ENCODE measurements at regions of chr4 and their contacts with region 1.

Region 1: DNA sequence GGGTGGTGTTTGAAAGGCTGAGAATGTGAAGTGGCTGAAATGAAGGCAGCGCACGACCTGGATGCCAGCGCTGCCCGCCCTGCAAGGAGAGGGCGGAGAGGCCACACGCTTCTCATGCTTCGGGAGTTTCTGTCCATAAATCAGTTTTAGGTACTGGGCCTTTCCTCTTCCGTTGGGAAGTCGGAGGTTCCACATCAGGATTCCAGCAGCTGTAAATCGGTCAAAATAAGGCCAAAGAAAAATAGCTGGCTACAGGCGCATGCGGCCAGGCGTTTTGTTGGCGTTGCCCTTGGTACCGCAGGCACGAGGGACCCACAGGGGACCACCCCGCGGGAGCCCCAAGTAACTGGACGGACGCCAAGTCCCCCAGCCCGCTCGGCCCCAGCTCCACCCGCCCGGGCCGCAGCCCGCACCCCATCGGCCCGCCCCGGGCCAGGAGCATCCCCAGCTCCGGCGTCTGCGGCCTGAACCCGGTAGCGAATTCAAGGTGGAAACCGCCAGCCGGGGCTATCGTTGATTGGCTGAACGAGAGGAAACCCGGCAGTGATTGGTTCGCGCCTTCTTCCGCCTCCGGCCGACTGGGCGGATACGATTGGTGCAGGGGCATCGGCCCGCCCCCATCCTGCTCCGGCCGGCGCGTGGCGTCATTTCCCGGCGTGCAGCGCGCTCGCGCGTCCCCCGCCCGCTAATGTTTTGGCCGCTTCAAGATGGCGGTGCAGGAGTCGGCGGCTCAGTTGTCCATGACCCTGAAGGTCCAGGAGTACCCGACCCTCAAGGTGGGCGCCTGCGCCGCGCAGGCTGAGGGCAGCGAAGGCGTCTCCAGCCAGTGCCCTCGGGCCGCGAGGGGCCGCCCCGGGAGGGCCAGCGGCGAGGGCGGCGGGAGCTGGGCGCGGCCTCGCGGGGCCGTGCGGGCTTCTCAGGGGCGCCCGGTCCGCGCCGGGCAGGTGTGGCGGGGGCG is at the start of gene MAEA:
- DNase-seq: peak; percentile 96 to 97 (median 96)
- H3K4me3 ChIP-seq: peak within 1 kb of the TSS; percentile 54 to 82 (median 73)
- H3K4me3 Mint-ChIP-seq: peak within 1 kb of the TSS; percentile 97
- H3K27ac ChIP-seq: peak within 1 kb of the TSS; percentile 65 to 91
- H3K27ac Mint-ChIP-seq: peak within 1 kb of the TSS; percentile 90 to 97 (median 96)
- H3K4me1 ChIP-seq: peaks cover 25 to 36% of the 10 kb centered on the region in 2 donors
- H3K4me1 Mint-ChIP-seq: peaks cover 34% of the 10 kb centered on the region
- H3K27me3 ChIP-seq: no peaks in the 10 kb centered on the region
- H3K27me3 Mint-ChIP-seq: peaks cover 0 to 1% (median 0%) of the 10 kb centered on the region in 3 donors
- CTCF ChIP-seq: no peak
- polyA plus RNA-seq, gene MAEA: 34.3 to 83.5 (median 37.7) TPM

Region 2: GRCh38 chr4:931960-932712 is 357.4 kb before region 1 on chr4 and contains the starts of genes GAK and TMEM175:
- intact Hi-C with region 1: loop called in 1 of 2 experiments (anchors 5 kb)
- DNase-seq: peak; percentile 96 to 97 (median 97)
- H3K4me3 ChIP-seq: peak within 1 kb of the TSS; percentile 92 to 97 (median 93)
- H3K4me3 Mint-ChIP-seq: peak within 1 kb of the TSS; percentile 96 to 98
- H3K27ac ChIP-seq: peak within 1 kb of the TSS; percentile 84 to 98
- H3K27ac Mint-ChIP-seq: peak within 1 kb of the TSS; percentile 96 to 99 (median 97)
- H3K4me1 ChIP-seq: peaks cover 69 to 76% of the 10 kb centered on the region in 2 donors
- H3K4me1 Mint-ChIP-seq: peaks cover 66% of the 10 kb centered on the region
- H3K27me3 ChIP-seq: no peaks in the 10 kb centered on the region
- H3K27me3 Mint-ChIP-seq: peaks cover 0 to 3% (median 3%) of the 10 kb centered on the region in 3 donors
- CTCF ChIP-seq: no peak
- polyA plus RNA-seq, gene GAK: 40.3 to 88.7 (median 54.9) TPM
- polyA plus RNA-seq, gene TMEM175: 18.9 to 216 (median 20.7) TPM

Region 3: DNA sequence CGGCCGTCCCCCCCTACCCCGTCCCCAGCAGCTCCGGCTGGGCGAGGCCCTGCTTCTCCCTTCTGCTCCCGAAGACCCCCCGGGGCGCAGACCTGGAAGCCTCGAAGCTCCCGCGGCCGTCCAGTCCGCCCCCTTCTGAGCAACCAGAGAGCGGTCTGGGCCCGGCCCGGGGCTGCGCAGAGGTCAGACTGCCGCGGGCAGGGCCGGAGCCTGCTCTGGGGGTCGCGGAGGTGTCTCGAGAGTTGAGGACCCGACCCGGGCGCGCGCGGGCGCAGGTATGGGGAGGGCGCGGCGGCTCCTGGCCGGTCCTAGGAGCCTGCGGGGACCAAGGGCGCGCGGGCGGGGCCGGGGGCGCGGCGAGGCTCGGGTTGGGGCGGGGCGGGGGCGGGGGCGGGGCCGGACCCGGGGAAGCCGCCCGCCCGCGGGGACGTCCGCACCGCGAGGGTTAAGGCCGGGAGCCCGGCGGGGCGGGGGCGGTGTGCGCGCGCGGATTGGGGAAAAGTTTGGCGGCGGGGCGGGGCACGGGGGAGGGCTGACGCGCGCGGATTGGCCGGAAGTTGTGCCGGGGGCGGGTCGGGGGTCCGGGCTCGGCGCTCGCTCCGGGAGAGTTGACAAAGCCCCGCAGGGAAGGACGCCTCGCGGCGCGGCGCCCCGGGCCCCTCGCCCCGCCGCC is 278.3 kb before region 1 on chr4 and contains the start of gene FGFRL1:
- intact Hi-C with region 1: loop called in 1 of 2 experiments (anchors 5 kb)
- DNase-seq: peak; percentile 71 to 85 (median 84)
- H3K4me3 ChIP-seq: peak within 1 kb of the TSS; percentile 34 to 82 (median 60)
- H3K4me3 Mint-ChIP-seq: peak within 1 kb of the TSS; percentile 83 to 89
- H3K27ac ChIP-seq: peak within 1 kb of the TSS; percentile 48 to 82
- H3K27ac Mint-ChIP-seq: peak within 1 kb of the TSS; percentile 54 to 90 (median 79)
- H3K4me1 ChIP-seq: peaks cover 23 to 43% of the 10 kb centered on the region in 2 donors
- H3K4me1 Mint-ChIP-seq: peaks cover 18% of the 10 kb centered on the region
- H3K27me3 ChIP-seq: peaks cover 4 to 41% of the 10 kb centered on the region in 2 donors
- H3K27me3 Mint-ChIP-seq: peaks cover 27 to 40% (median 30%) of the 10 kb centered on the region in 3 donors
- CTCF ChIP-seq: no peak
- polyA plus RNA-seq, gene FGFRL1: 0.17 to 77.7 (median 0.28) TPM

Region 4: DNA sequence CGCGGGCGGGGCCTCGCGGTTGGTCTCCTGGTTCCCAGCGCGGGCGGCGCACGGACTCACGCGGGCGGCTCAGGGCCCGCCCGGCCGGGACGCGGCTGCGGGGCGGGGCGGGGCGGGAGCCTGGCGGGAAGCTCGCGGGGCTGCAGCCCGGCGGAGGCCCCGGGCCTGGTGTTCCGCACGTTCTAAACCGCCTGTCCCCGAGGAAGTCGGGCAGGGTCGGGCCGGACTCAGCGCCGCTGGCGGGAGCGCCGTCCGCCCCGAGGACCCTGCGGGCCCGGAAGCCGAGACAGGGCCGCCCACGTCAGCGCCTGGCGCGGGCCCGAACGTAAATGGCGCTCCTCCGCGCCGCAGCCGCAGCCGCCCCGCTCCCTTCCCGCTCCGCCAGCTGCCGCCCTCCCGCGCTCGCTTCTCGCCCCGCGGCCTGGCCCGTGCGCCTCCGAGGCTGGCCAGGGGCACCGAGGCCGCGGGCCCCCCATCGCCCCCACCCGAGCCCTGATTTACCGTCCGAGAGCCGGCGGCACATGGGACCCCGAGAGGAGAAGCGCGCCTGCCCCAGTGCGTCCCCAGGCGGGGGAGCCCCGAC is 40.2 kb before region 1 on chr4:
- intact Hi-C with region 1: loop called (anchors 5 kb)
- DNase-seq: peak; percentile 75 to 83 (median 82)
- H3K4me3 ChIP-seq: peak overlapping the region; percentile 62 to 81 (median 79)
- H3K4me3 Mint-ChIP-seq: peak overlapping the region; percentile 83 to 88
- H3K27ac ChIP-seq: peak overlapping the region; percentile 81 to 88
- H3K27ac Mint-ChIP-seq: peak overlapping the region; percentile 76 to 93 (median 89)
- H3K4me1 ChIP-seq: peaks cover 31 to 40% of the 10 kb centered on the region in 2 donors
- H3K4me1 Mint-ChIP-seq: peaks cover 40% of the 10 kb centered on the region
- H3K27me3 ChIP-seq: no peaks in the 10 kb centered on the region
- H3K27me3 Mint-ChIP-seq: peaks cover 0 to 6% (median 0%) of the 10 kb centered on the region in 3 donors
- CTCF ChIP-seq: no peak

Region 5: GRCh38 chr4:1300466-1301455 is 11.3 kb after region 1 on chr4:
- intact Hi-C with region 1: loop called in 1 of 2 experiments (anchors 1 kb)
- DNase-seq: peak; percentile 99 to 100 (median 99)
- H3K4me3 ChIP-seq: peak overlapping the region in 1 of 3 experiments; percentile 40
- H3K4me3 Mint-ChIP-seq: peak overlapping the region; percentile 34 to 63
- H3K27ac ChIP-seq: peak overlapping the region; percentile 99
- H3K27ac Mint-ChIP-seq: peak overlapping the region; percentile 96 to 99 (median 98)
- H3K4me1 ChIP-seq: peaks cover 31 to 36% of the 10 kb centered on the region in 2 donors
- H3K4me1 Mint-ChIP-seq: peaks cover 44% of the 10 kb centered on the region
- H3K27me3 ChIP-seq: no peaks in the 10 kb centered on the region
- H3K27me3 Mint-ChIP-seq: peaks cover 0 to 1% (median 0%) of the 10 kb centered on the region in 3 donors
- CTCF ChIP-seq: no peak

Region 6: GRCh38 chr4:1318488-1319213 is 29.2 kb after region 1 on chr4:
- intact Hi-C with region 1: no loop called
- DNase-seq: no peak
- H3K4me3 ChIP-seq: no peak overlapping the region
- H3K4me3 Mint-ChIP-seq: no peak overlapping the region
- H3K27ac ChIP-seq: no peak overlapping the region
- H3K27ac Mint-ChIP-seq: peak overlapping the region in 5 of 7 donors; percentile 62 to 70 (median 67)
- H3K4me1 ChIP-seq: no peaks in the 10 kb centered on the region
- H3K4me1 Mint-ChIP-seq: no peaks in the 10 kb centered on the region
- H3K27me3 ChIP-seq: no peaks in the 10 kb centered on the region
- H3K27me3 Mint-ChIP-seq: no peaks in the 10 kb centered on the region
- CTCF ChIP-seq: peak; percentile 40

Measured in CD14-positive monocyte (primary cell).